ENCODE measurements at regions of chr17 and their contacts with region 1.

Region 1: DNA sequence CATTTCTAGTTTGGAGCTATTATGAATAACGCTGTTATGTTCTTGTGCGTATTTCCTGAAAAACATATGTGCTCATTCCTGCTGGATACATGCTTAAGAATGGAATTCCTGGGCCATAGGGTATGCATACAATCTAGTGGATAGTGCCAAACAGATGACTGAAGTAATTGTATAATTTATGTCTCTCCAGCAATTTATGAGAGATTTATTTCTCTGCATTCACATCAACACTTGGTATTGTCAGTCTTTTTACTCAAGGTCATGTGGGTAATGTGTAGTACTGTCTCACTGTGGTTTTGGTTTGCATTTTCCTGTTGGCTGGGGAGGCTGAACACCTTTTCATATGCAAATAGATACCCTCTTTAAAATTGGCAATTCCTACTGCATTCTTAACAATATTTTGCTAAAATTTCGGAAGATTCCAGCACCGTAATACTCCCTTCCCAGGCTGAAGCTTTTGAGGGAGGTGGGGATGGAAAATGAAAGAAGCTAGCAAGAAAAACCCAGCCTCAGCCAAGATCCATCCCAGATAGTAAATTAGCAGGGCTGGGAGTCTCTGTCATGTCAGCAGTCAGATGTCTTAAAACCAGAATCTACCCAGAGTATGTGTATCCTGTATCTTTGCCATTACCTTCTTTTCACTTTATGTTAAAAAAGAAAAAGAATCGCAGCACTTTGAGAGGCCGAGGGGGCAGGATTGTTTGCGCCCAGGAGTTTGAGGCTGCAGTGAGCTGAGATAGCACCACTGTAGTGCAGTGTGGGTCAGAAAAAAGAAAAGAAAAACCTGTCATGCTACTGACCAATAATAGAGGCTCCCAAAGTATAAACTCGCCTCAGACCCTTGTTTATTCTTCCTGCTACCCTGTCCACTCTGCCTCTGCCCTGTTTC is 204.9 kb downstream of the LGALS9B start:
- DNase-seq: no peak
- H3K4me3 Mint-ChIP-seq: no peak overlapping the region
- H3K27ac Mint-ChIP-seq: no peak overlapping the region
- H3K4me1 Mint-ChIP-seq: peaks cover 37% of the 10 kb centered on the region
- H3K27me3 Mint-ChIP-seq: no peaks in the 10 kb centered on the region

Region 2: DNA sequence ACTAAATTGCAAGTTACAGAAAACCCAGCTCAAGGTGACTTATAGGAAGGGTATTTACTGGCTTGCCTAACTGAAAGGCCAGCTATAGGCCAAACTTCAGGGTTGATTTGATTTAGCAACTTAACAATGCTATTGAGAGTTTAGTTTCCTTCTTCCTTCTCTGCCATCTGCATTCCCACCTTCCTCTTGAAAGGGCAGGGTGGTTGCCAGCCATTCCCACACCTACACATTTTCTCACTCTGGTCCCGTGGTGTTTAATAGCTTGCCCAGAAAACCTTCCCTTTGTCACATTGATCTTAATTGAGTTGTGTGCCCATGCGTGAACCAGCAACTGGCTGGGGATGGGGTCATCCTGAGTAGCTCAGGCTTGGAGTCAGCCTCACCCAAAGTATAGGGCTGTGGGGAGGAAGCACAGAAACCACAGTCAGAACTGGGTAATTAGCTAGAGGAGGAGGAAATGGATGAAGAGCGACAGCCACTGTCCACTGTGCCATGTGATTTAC is 58.7 kb before region 1 on chr17:
- CTCF ChIA-PET with region 1: no interaction called
- POLR2A ChIA-PET with region 1: no interaction called
- intact Hi-C with region 1: no loop called
- DNase-seq: no peak
- H3K4me3 Mint-ChIP-seq: no peak overlapping the region
- H3K27ac Mint-ChIP-seq: no peak overlapping the region
- H3K4me1 Mint-ChIP-seq: peaks cover 18% of the 10 kb centered on the region
- H3K27me3 Mint-ChIP-seq: no peaks in the 10 kb centered on the region

Region 3: DNA sequence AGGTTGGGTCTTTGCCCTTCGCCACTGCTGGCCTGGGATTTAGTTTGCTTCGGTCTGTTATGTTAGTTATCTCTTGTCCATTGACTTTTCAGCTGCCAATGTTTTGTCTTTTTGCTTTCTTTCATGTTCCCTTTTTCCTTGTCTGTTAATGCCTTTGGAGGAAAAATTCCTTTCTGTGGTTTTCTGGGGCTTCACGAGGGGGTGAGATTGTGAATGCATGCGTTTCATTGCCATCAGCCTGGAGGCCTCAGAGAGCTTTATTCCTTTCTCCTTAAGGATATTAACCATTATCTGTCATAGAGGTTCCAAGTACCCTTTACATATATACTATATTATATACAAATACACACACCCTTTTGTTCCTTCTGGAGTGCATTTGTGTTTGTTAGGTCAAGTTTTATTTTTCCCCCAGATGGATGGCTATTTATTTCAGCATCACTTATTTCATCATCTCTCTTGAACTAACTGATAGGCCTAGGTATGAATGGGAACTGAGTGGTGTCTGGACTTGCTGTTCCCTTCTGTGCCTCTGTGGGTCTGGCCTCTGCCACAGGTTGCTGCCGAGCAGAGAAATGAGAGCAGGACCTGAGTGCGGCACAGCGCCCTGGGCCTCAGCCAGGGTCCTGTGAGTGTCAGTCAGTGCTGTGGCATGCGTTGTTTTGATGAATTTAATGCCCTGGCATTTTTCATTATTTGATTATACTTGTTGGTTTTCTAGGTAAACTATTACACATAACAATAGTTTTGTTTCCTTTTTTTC is 11.5 kb after region 1 on chr17:
- CTCF ChIA-PET with region 1: interaction called, 3 read pairs
- POLR2A ChIA-PET with region 1: no interaction called
- intact Hi-C with region 1: loop called (anchors 1 kb)
- DNase-seq: peak; percentile 36
- H3K4me3 Mint-ChIP-seq: peak overlapping the region; percentile 18
- H3K27ac Mint-ChIP-seq: peak overlapping the region; percentile 36
- H3K4me1 Mint-ChIP-seq: peaks cover 72% of the 10 kb centered on the region
- H3K27me3 Mint-ChIP-seq: no peaks in the 10 kb centered on the region

Measured in activated CD4-positive, alpha-beta memory T cell treated with anti-CD3 and anti-CD28 coated beads for 36 hours (primary cell).